Activated T-helper 2 cell treated with anti-CD3 and anti-CD28 coated beads, Interferon-gamma antibody, Interleukin-2, Interleukin-4, amounts not matched to agents 10 μg/mL and 5 μg/mL and 100 μg/mL, durations not matched to agents 14 hours and 24 hours and 36 hours (primary cell): ENCODE measurements at regions of chr1 and their contacts with region 1.

Region 1: DNA sequence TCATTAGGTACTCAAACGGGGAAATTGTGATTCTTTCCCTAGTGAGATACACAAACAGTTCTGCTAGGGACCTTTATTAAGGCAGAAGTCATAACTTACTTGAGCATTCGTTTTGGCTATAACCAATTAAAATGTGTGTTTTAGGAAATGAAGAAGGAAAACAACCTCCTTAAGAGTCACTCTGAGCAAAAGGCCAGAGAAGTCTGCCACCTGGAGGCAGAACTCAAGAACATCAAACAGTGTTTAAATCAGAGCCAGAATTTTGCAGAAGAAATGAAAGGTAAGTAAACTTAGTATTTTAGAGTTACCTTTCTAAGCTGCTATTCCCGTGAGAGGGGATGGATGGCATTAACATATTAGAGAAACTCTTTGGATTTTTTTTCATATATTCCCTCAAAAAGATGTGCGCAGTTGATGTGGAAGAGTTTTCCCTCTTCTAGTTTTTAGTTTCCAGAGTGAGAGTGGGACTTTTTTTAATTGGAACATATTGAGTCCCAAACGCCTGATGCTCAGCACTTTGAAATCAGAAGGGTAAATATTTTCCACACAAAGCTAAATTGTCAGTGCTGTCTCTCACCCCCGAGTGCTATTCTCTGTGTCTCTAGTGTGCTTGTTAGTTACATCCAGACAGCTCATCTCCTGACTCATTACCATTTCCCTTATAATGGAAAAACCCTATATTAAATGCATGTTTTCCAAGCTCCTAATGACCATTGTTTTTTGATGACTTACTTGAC is 34.9 kb downstream of the CENPF start:
- DNase-seq: no peak
- H3K4me3 Mint-ChIP-seq: no peak overlapping the region
- H3K27ac Mint-ChIP-seq: peak overlapping the region; percentile 42
- H3K4me1 Mint-ChIP-seq: peaks cover 35% of the 10 kb centered on the region
- H3K27me3 Mint-ChIP-seq: no peaks in the 10 kb centered on the region

Region 2: GRCh38 chr1:214213136-214213535 is 424.8 kb before region 1 on chr1:
- intact Hi-C with region 1: loop called (anchors 5 kb)
- DNase-seq: no peak
- H3K4me3 Mint-ChIP-seq: no peak overlapping the region
- H3K27ac Mint-ChIP-seq: no peak overlapping the region
- H3K4me1 Mint-ChIP-seq: peaks cover 3% of the 10 kb centered on the region
- H3K27me3 Mint-ChIP-seq: peaks cover 31% of the 10 kb centered on the region

Region 3: GRCh38 chr1:214648801-214649200 is 10.9 kb after region 1 on chr1:
- intact Hi-C with region 1: no loop called
- DNase-seq: no peak
- H3K4me3 Mint-ChIP-seq: no peak overlapping the region
- H3K27ac Mint-ChIP-seq: no peak overlapping the region
- H3K4me1 Mint-ChIP-seq: peaks cover 19% of the 10 kb centered on the region
- H3K27me3 Mint-ChIP-seq: no peaks in the 10 kb centered on the region